Dendritic cell treated with granulocyte-macrophage colony-stimulating factor and Interleukin-4, amounts not matched to agents 40 ng/mL and 50 ng/mL, for 4 days (primary cell): ENCODE measurements at regions of chr11 and their contacts with region 1.

Region 1: GRCh38 chr11:27362749-27363575 is at the start of gene CCDC34:
- H3K4me3 Mint-ChIP-seq: peak within 1 kb of the TSS; percentile 89
- H3K27ac Mint-ChIP-seq: peak within 1 kb of the TSS; percentile 83
- H3K4me1 Mint-ChIP-seq: peaks cover 19% of the 10 kb centered on the region
- H3K27me3 Mint-ChIP-seq: no peaks in the 10 kb centered on the region

Region 2: GRCh38 chr11:27347361-27348339 is 15.3 kb before region 1 on chr11:
- intact Hi-C with region 1: no loop called
- H3K4me3 Mint-ChIP-seq: no peak overlapping the region
- H3K27ac Mint-ChIP-seq: no peak overlapping the region
- H3K4me1 Mint-ChIP-seq: no peaks in the 10 kb centered on the region
- H3K27me3 Mint-ChIP-seq: no peaks in the 10 kb centered on the region

Region 3: DNA sequence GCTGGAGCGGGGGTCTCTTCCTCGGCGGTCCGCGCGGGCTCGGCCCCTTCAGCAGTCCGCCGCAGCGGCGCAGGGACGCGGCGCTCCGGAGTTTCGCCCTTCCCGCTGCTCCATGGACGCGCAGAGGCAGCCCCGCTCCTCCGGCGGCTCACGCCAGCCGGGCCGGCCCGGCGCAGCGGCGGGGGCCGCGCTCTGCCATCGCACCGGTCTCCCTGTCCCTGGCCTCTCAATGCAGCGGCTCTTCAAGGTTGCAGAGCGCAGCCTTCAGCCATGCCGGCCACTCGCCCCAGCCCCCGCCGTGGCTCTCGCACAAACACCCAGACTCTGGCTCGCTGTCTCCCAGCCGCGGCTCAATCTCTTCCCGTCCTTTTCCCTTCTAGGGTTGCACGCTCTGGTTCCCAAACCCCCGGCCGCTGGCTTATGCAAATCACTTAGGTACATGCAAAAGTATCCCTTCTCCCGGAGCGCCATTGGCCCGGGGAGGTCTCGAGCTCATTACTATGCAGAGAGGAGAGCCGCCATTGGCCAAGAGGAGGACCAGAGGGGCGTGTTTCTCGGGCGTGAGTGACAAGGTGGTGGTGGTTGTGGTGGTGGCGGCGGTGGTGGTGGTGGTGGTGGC is 109.5 kb after region 1 on chr11 and contains the start of gene LGR4:
- intact Hi-C with region 1: loop called (anchors 1 kb)
- H3K4me3 Mint-ChIP-seq: peak within 1 kb of the TSS; percentile 87
- H3K27ac Mint-ChIP-seq: peak within 1 kb of the TSS; percentile 82
- H3K4me1 Mint-ChIP-seq: peaks cover 24% of the 10 kb centered on the region
- H3K27me3 Mint-ChIP-seq: peaks cover 26% of the 10 kb centered on the region

Region 4: DNA sequence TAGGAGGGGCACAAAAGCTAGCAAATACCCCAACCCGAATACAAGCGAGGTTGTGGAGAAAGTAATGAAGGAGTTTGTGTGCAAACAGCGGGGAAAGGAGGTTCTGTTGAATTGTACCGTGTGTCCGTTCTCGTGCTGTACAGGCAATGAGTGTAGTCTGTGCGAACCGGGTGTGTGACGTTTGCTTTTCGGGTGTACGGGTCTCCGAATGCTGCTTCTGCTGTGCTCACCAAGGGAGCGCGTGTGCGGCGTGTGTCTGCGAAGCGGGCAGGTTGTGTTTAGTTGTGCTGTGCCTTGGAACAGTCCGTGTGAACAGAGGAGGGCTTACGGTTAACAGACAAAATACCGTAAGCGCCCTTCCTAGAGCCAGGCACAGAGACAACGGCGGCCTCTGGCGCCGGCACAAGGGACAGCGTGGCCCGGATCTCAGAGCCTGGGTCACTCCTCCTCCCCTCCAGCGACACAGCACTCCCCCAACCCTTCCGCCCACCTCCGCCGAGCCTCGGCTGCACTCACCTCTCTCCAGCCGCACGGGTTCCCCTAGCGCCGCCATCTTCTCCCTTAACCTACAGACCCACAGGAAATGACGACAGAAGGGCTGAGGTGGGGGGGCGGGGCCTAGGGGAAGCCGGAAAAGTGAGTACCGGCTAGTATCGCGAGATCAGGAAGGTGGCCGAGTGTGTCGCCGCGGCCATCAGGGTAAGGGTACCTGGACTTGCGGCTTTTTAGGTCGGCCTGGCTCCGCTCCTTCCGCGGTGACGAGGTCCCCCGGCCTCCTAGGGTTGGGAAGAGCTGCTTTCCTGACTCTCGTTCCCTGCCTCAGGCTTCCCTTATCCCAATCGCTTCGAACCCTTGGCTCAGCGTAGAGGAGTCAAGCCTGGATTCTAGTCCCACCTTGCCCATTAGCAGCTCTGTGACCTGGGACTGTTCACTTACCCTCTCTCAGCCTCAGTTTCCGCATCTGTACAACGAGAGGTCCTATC is 143.5 kb after region 1 on chr11 and contains the start of gene LIN7C:
- intact Hi-C with region 1: loop called (anchors 2 kb)
- H3K4me3 Mint-ChIP-seq: peak within 1 kb of the TSS; percentile 98
- H3K27ac Mint-ChIP-seq: peak within 1 kb of the TSS; percentile 97
- H3K4me1 Mint-ChIP-seq: peaks cover 38% of the 10 kb centered on the region
- H3K27me3 Mint-ChIP-seq: no peaks in the 10 kb centered on the region

Region 5: DNA sequence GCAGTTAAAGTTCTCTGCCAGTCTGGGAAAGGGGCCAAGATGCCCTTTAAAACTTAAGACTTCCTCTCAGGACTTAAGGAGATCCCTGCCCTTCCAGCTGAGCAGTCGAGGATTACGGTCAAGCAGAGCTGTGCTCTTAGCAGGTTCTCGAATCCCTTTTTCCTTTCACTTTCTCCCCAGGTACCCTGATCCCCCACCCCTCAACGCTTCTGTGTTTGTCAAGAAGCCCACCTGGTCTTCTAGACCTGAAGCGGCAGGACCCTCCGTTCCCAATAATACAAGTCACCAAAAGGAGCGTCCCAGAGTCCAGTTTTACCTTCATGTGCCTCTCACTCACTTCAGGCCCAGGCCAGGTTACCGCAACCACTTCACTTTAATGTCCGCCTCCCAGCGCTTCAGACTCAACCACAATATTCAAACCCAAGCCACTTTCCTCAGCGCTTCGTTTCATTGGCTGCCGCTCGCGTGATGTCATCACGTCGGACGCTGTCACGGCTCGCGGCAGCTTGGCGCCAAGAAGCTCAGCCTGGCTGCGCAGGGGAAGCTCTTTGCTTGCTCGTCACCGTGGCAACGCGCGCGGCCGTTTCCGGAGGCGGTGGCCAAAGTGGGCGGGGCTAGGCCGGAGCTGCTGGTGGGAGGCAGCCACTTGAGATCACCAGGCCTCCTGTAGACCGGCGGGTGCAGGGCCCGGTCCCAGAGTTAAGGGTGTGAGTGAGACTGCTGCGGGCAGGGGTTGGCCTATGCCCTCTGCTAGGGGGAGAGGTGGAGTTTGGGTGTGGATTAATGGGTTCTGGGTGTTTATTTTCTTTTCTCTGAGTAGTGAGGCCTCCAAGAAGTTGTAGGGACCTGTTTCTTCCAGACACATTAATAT is 745.0 kb after region 1 on chr11 and contains the starts of genes KIF18A and METTL15:
- intact Hi-C with region 1: loop called (anchors 10 kb)
- H3K4me3 Mint-ChIP-seq: peak within 1 kb of the TSS; percentile 93
- H3K27ac Mint-ChIP-seq: peak within 1 kb of the TSS; percentile 94
- H3K4me1 Mint-ChIP-seq: peaks cover 35% of the 10 kb centered on the region
- H3K27me3 Mint-ChIP-seq: no peaks in the 10 kb centered on the region